ENCODE measurements at regions of chr1 and their contacts with region 1.

Region 1: GRCh38 chr1:185317034-185317885 is at the start of gene IVNS1ABP:
- DNase-seq: peak; percentile 86
- ATAC-seq: peak; percentile 77
- H3K4me3 ChIP-seq: peak within 1 kb of the TSS; percentile 79
- H3K27ac ChIP-seq: peak within 1 kb of the TSS; percentile 98
- H3K4me1 ChIP-seq: no peaks in the 10 kb centered on the region; the same call in 1 of the 2 replicates
- H3K27me3 ChIP-seq: no peaks in the 10 kb centered on the region
- CTCF ChIP-seq: peak; percentile 44 to 70 (median 57)
- EP300 ChIP-seq: 0 out of 4 replicates have a peak, but pooled peaks of 1 of the 2 experiments have one; percentile 4
- POLR2A ChIP-seq: peak; percentile 100
- RAD21 ChIP-seq: peak; percentile 70
- polyA plus RNA-seq, gene IVNS1ABP: 19.2 to 29.2 TPM

Region 2: GRCh38 chr1:185227161-185227560 is 90.1 kb before region 1 on chr1:
- CTCF ChIA-PET with region 1: no interaction called
- POLR2A ChIA-PET with region 1: no interaction called
- RAD21 ChIA-PET with region 1: no interaction called
- SMC1A ChIA-PET with region 1: no interaction called
- in situ Hi-C with region 1: no loop called
- intact Hi-C with region 1: no loop called
- DNase-seq: no peak
- ATAC-seq: no peak
- H3K4me3 ChIP-seq: no peak overlapping the region
- H3K27ac ChIP-seq: no peak overlapping the region
- H3K4me1 ChIP-seq: no peaks in the 10 kb centered on the region
- H3K27me3 ChIP-seq: no peaks in the 10 kb centered on the region
- CTCF ChIP-seq: no peak
- EP300 ChIP-seq: no peak
- POLR2A ChIP-seq: no peak
- RAD21 ChIP-seq: no peak

Region 3: GRCh38 chr1:185238447-185238846 is 78.8 kb before region 1 on chr1:
- CTCF ChIA-PET with region 1: interaction called, 10 read pairs
- POLR2A ChIA-PET with region 1: interaction called, 5 read pairs
- RAD21 ChIA-PET with region 1: interaction called, 52 read pairs
- SMC1A ChIA-PET with region 1: interaction called, 30 read pairs
- in situ Hi-C with region 1: no loop called
- intact Hi-C with region 1: no loop called
- DNase-seq: no peak
- ATAC-seq: peak; percentile 50
- H3K4me3 ChIP-seq: no peak overlapping the region
- H3K27ac ChIP-seq: no peak overlapping the region
- H3K4me1 ChIP-seq: no peaks in the 10 kb centered on the region
- H3K27me3 ChIP-seq: no peaks in the 10 kb centered on the region
- CTCF ChIP-seq: peak; percentile 29 to 40 (median 29); a peak in 4 of 6 replicates
- EP300 ChIP-seq: no peak
- POLR2A ChIP-seq: no peak
- RAD21 ChIP-seq: peak; percentile 39

Region 4: GRCh38 chr1:185408700-185409270 is 91.5 kb after region 1 on chr1:
- CTCF ChIA-PET with region 1: interaction called, 3 read pairs
- POLR2A ChIA-PET with region 1: interaction called, 4 read pairs
- RAD21 ChIA-PET with region 1: interaction called, 4 read pairs
- SMC1A ChIA-PET with region 1: no interaction called
- in situ Hi-C with region 1: no loop called
- intact Hi-C with region 1: loop called (anchors 5 kb)
- DNase-seq: no peak
- ATAC-seq: peak; percentile 51
- H3K4me3 ChIP-seq: no peak overlapping the region
- H3K27ac ChIP-seq: no peak overlapping the region
- H3K4me1 ChIP-seq: no peaks in the 10 kb centered on the region
- H3K27me3 ChIP-seq: no peaks in the 10 kb centered on the region
- CTCF ChIP-seq: no peak
- EP300 ChIP-seq: no peak
- POLR2A ChIP-seq: no peak
- RAD21 ChIP-seq: no peak

Region 5: GRCh38 chr1:185559684-185560331 is 242.5 kb after region 1 on chr1:
- CTCF ChIA-PET with region 1: interaction called, 9 read pairs
- POLR2A ChIA-PET with region 1: no interaction called
- RAD21 ChIA-PET with region 1: interaction called, 8 read pairs
- SMC1A ChIA-PET with region 1: interaction called, 4 read pairs
- in situ Hi-C with region 1: no loop called
- intact Hi-C with region 1: loop called (anchors 1 kb)
- DNase-seq: peak; percentile 72
- ATAC-seq: peak; percentile 96
- H3K4me3 ChIP-seq: no peak overlapping the region
- H3K27ac ChIP-seq: no peak overlapping the region
- H3K4me1 ChIP-seq: peaks cover 7% of the 10 kb centered on the region
- H3K27me3 ChIP-seq: no peaks in the 10 kb centered on the region
- CTCF ChIP-seq: peak; percentile 34 to 51 (median 46)
- EP300 ChIP-seq: peak in 1 of 2 experiments; percentile 66; a peak in 2 of 4 replicates
- POLR2A ChIP-seq: no peak
- RAD21 ChIP-seq: peak; percentile 59

Region 6: DNA sequence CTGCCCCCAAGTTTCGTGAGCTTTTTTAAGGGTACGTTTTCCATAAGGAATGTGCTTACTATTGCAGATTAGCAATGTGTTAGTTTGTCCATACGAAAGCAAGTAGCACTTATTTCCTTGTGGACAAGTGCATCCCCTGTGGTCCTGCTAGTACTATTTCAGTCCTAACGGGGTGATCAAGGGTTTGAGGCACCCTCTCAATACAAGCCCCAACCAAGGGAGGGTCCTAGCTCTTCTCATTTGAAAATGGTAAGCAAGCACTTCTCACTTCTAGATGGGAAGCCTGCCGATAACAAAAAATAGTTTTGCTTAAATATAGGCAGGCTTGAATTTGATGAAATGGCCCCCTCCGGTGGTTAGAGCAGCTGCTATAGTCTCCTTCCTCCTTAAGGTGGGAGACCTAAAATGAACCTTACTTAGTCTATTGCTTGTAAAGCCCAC is 352.9 kb after region 1 on chr1:
- CTCF ChIA-PET with region 1: interaction called, 7 read pairs
- POLR2A ChIA-PET with region 1: no interaction called
- RAD21 ChIA-PET with region 1: interaction called, 11 read pairs
- SMC1A ChIA-PET with region 1: interaction called, 5 read pairs
- in situ Hi-C with region 1: no loop called
- intact Hi-C with region 1: no loop called
- DNase-seq: no peak
- ATAC-seq: peak; percentile 69
- H3K4me3 ChIP-seq: no peak overlapping the region
- H3K27ac ChIP-seq: no peak overlapping the region
- H3K4me1 ChIP-seq: no peaks in the 10 kb centered on the region
- H3K27me3 ChIP-seq: no peaks in the 10 kb centered on the region; a peak in 1 of 4 replicates
- CTCF ChIP-seq: peak; percentile 18 to 39 (median 21); a peak in 3 of 6 replicates
- EP300 ChIP-seq: no peak
- POLR2A ChIP-seq: no peak
- RAD21 ChIP-seq: peak; percentile 55